ENCODE measurements at regions of chr3 and their contacts with region 1.

Region 1: DNA sequence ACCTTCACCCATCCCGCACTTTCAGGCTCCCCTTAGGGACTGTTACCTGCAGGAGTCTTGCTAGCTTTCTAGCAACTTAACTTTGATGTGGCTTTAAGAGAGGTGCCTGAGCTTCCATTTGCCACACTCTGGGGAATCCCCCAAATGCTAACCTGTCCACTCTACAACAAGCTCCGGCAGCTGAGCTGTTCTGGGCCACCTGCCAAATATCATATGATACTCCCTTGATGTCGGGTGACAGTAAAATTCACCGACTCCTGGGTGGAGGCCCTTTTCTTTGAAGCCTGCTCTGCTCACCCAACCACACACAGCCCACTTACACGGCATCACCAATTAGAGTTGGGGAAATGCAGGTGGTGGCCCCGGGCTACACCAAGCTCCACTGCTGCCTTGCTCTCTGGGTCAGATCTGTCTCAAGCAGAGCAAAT is 38.0 kb upstream of the XCR1 start:
- DNase-seq: peak in 1 of 2 donors; percentile 37
- ATAC-seq: peak; percentile 32 to 82 (median 64)
- H3K4me3 ChIP-seq: no peak overlapping the region
- H3K27ac ChIP-seq: peak overlapping the region in 7 of 10 donors; percentile 4 to 57 (median 30)
- H3K4me1 ChIP-seq: peaks cover 0 to 60% (median 24%) of the 10 kb centered on the region in 9 donors
- H3K27me3 ChIP-seq: peaks cover 0 to 8% (median 0%) of the 10 kb centered on the region in 7 donors
- CTCF ChIP-seq: no peak

Region 2: GRCh38 chr3:45473841-45474240 is 591.5 kb before region 1 on chr3:
- intact Hi-C with region 1: no loop called
- DNase-seq: no peak
- ATAC-seq: no peak
- H3K4me3 ChIP-seq: no peak overlapping the region
- H3K27ac ChIP-seq: no peak overlapping the region
- H3K4me1 ChIP-seq: no peaks in the 10 kb centered on the region
- H3K27me3 ChIP-seq: no peaks in the 10 kb centered on the region
- CTCF ChIP-seq: no peak

Region 3: GRCh38 chr3:45986303-45986982 is 78.9 kb before region 1 on chr3:
- intact Hi-C with region 1: loop called in 2 of 10 experiments (anchors 5 to 10 kb)
- DNase-seq: peak; percentile 43 to 71
- ATAC-seq: peak; percentile 68 to 87 (median 84)
- H3K4me3 ChIP-seq: no peak overlapping the region
- H3K27ac ChIP-seq: peak overlapping the region; percentile 79 to 99 (median 92)
- H3K4me1 ChIP-seq: peaks cover 39 to 99% (median 90%) of the 10 kb centered on the region in 9 donors
- H3K27me3 ChIP-seq: no peaks in the 10 kb centered on the region
- CTCF ChIP-seq: no peak

Region 4: GRCh38 chr3:45995236-45996192 is 69.8 kb before region 1 on chr3 and contains the start of gene FYCO1:
- intact Hi-C with region 1: loop called in 2 of 10 experiments (anchors 5 to 10 kb)
- DNase-seq: peak; percentile 95
- ATAC-seq: peak; percentile 93 to 98 (median 96)
- H3K4me3 ChIP-seq: peak within 1 kb of the TSS; percentile 47 to 99 (median 89)
- H3K27ac ChIP-seq: peak within 1 kb of the TSS; percentile 79 to 99 (median 96)
- H3K4me1 ChIP-seq: peaks cover 4 to 53% (median 49%) of the 10 kb centered on the region in 9 donors
- H3K27me3 ChIP-seq: no peaks in the 10 kb centered on the region
- CTCF ChIP-seq: no peak
- total RNA-seq, gene FYCO1: 82.3 to 216 (median 156) TPM

Region 5: GRCh38 chr3:46013316-46014094 is 51.8 kb before region 1 on chr3:
- intact Hi-C with region 1: loop called in 1 of 10 experiments (anchors 5 kb)
- DNase-seq: no peak
- ATAC-seq: no peak
- H3K4me3 ChIP-seq: no peak overlapping the region
- H3K27ac ChIP-seq: no peak overlapping the region
- H3K4me1 ChIP-seq: peaks cover 0 to 4% (median 0%) of the 10 kb centered on the region in 9 donors
- H3K27me3 ChIP-seq: no peaks in the 10 kb centered on the region
- CTCF ChIP-seq: no peak

Region 6: DNA sequence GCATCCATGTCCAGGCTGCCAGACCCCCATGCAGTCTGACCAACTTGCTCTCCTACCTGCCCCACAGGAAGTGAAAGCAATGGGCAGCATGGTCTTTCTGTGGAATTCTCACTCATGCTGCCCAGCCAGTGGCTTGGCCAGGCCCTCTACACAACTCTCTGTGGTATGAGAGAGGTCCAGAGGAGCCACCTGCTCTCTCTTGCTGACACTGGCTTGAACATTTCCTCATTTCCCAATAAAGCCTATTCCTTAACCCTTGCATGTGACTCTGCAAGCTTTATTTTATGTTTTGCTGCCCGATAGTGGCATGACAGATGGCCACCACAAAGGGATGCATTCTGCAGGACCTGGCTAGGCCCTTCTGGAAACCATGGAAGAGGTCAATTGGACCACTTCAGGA is 89.0 kb after region 1 on chr3:
- intact Hi-C with region 1: no loop called
- DNase-seq: no peak
- ATAC-seq: peak in 2 of 8 donors; percentile 29 to 49
- H3K4me3 ChIP-seq: no peak overlapping the region
- H3K27ac ChIP-seq: no peak overlapping the region
- H3K4me1 ChIP-seq: peaks cover 0 to 17% (median 0%) of the 10 kb centered on the region in 9 donors
- H3K27me3 ChIP-seq: no peaks in the 10 kb centered on the region
- CTCF ChIP-seq: no peak